Panc1 (cell line): ENCODE measurements at regions of chr3 and their contacts with region 1.

Region 1: DNA sequence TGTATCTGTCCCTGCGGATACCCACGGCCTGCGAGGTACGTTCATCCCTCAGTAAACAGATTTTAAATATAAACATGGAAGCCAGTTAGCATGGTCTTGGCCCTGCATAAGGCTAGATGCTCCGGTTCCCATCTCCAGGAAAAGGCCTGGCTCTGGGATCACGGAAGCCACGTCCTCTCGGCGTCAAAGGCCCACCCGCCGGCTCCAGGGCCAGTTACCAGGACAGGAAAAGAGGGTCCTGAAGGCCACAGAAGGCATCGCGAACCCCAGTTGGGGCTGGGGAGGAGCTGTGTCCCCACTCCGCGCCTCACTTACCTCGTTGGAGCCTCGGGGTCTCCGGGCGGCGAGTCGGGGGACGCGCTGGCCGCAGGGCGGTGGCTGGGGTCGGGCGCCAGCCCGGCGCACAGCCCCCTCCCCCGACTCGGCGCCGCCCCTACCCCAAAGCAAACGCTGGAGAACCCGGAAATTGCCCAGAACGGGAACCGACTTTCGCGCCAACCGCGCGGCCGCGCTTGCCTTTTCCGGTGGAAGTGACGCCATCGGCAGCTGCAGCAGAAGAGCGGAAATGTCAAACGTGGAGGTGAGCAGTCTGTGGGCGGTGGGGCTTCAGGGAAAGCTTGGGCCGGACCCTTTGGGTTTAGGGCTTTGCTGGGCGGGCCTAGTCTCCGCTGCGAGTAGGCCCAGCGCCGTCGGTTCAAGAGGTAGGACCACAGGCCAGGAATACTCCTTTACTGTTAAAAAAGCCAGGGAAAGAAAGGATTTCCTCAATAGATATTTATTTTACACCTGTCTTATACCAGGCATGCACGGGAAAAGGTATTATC is at the start of gene TOPBP1:
- DNase-seq: no peak
- ATAC-seq: peak; percentile 95
- H3K4me3 ChIP-seq: peak within 1 kb of the TSS; percentile 84 to 97
- H3K27ac ChIP-seq: peak within 1 kb of the TSS; percentile 95
- H3K4me1 ChIP-seq: peaks cover 33% of the 10 kb centered on the region
- H3K27me3 ChIP-seq: no peaks in the 10 kb centered on the region
- CTCF ChIP-seq: no peak
- total RNA-seq, gene TOPBP1: 78.4 TPM

Region 2: DNA sequence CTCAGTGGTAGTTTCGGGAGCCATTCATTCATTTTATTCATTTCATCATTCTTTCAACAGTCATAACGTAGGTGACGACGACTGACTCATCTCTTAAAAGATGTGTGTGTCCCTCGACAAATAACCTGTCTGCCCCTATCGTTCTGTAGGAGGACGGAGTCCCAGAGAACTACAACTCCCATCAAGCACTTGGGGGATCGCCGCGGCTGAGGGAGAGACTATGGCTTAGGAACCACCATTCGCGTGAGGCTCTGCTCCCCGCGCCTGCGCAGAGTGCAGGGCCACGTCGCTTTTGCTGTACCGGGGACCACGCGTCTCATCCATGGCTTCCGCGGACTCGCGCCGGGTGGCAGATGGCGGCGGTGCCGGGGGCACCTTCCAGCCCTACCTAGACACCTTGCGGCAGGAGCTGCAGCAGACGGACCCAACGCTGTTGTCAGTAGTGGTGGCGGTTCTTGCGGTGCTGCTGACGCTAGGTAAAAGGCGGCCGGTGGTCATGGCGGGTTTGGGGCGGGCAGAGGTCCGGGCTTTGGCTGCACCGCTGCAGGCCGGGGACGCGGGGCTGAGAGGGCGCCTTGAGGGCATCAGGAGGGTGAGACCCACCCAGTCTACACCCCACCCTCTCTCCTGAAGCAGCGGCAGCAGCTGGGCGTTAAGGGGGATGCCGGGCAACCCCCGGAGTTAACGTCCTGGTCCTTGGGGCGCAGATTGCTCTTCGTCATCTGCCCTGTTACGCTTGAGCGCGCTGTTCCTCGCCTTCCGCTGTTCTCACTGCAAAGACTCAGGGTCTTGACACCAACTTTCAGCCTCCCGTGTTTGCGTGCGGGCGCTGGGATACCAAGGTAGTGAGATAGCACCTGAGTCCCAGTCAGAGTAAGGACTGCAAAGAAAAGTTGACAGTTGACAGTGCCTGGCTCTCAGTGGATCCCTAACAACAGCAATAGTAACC is 144.1 kb after region 1 on chr3 and contains the start of gene SRPRB:
- CTCF ChIA-PET with region 1: no interaction called
- POLR2A ChIA-PET with region 1: interaction called, 5 read pairs
- in situ Hi-C with region 1: no loop called
- intact Hi-C with region 1: loop called (anchors 5 kb)
- DNase-seq: peak; percentile 82
- ATAC-seq: peak; percentile 100
- H3K4me3 ChIP-seq: peak within 1 kb of the TSS; percentile 82 to 96
- H3K27ac ChIP-seq: peak within 1 kb of the TSS; percentile 74
- H3K4me1 ChIP-seq: peaks cover 16% of the 10 kb centered on the region; the same call in 1 of the 2 replicates
- H3K27me3 ChIP-seq: no peaks in the 10 kb centered on the region; the same call in 1 of the 2 replicates
- CTCF ChIP-seq: no peak
- total RNA-seq, gene SRPRB: 73.5 TPM